IMR-90 (cell line): ENCODE measurements at regions of chr11 and their contacts with region 1.

Region 1: DNA sequence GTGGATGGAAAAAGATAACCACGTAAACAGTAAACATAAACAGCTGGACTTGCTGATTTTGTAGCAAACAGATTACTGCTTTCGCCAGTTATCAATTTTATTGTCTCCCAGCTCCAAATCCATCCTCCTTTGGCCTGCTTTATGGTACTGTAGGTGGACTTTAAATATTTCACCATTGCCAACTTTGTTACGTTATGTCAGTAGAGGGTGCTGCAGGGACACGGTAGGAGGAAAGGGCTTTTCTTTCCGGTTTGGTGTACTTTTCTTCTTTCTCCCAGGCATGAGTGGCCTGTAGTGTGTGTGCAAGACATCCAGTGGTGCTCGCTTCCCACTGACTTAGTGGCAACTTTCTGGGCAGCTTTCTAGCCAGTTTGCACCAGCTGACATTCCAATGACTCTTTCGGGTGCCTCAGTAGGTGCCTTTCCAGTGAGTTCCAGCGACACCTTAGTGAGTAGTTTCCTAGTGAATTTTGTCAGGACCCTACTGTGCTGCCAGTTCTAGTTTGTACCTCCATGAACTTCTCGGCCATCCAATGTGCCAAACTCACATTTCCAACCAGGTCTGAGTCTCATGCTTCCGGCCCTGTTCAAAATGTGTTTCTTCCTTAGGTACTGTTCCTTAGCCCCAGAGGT is 267.6 kb upstream of the TENM4 start:
- DNase-seq: peak; percentile 50
- ATAC-seq: peak; percentile 83
- H3K4me3 ChIP-seq: no peak overlapping the region
- H3K27ac ChIP-seq: no peak overlapping the region
- H3K4me1 ChIP-seq: no peaks in the 10 kb centered on the region
- H3K27me3 ChIP-seq: no peaks in the 10 kb centered on the region
- CTCF ChIP-seq: peak; percentile 76
- POLR2A ChIP-seq: no peak
- RAD21 ChIP-seq: peak; percentile 92

Region 2: DNA sequence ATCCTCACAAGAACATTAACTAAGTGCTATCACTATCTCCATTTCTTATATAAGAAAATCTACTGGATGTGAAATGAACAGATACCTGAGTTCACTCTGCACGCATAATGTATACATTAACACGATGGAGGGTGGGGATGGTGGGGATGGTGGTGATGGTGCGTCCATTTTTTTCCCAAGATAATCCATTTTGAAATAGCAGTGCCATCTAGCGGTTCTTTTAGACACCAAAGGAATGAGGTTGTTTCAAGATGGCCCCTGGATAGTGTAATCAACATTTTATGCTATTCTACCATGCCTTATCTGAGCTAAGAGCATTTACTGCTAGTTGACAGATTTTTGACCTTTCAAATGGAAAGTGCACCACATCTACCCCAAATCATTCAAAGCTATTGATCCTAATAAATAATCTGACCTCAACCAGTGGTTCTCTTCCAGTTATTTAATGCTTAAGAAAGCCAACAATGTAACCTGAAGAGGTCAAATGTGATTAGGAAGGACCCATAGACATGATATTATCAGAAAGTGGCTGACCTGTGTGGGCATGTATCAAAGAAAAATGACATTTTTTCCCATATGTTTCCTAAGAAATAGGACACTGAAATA is 447.1 kb after region 1 on chr11:
- CTCF ChIA-PET with region 1: interaction called, 10 read pairs
- POLR2A ChIA-PET with region 1: no interaction called
- dilution Hi-C with region 1: no loop called
- in situ Hi-C with region 1: loop called (anchors 5 kb)
- intact Hi-C with region 1: loop called (anchors 1 kb)
- DNase-seq: peak; percentile 37
- ATAC-seq: peak; percentile 85
- H3K4me3 ChIP-seq: no peak overlapping the region
- H3K27ac ChIP-seq: no peak overlapping the region
- H3K4me1 ChIP-seq: no peaks in the 10 kb centered on the region
- H3K27me3 ChIP-seq: no peaks in the 10 kb centered on the region
- CTCF ChIP-seq: peak; percentile 80
- POLR2A ChIP-seq: no peak
- RAD21 ChIP-seq: peak; percentile 82

Region 3: DNA sequence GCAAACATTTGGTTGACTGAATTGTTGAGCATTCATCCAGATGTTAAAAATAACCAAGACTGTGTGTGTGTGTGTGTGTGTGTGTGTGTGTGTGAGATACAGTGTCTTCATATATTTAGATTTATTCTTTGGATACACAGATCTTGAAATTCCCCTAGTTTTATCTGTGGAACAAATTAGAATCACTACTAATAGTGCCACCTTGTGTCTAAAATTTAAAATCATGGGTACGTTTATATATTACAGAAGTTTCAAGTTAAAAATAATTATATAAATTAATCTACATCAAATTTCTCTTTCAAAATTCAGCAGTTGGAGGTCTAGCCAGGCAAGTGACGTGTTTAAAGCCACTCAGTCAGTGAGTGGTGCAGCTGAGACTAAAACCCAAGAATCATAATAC is 1298.6 kb after region 1 on chr11:
- CTCF ChIA-PET with region 1: no interaction called
- POLR2A ChIA-PET with region 1: no interaction called
- dilution Hi-C with region 1: no loop called
- in situ Hi-C with region 1: no loop called
- intact Hi-C with region 1: loop called (anchors 2 kb)
- DNase-seq: peak; percentile 14
- ATAC-seq: no peak
- H3K4me3 ChIP-seq: no peak overlapping the region
- H3K27ac ChIP-seq: no peak overlapping the region
- H3K4me1 ChIP-seq: no peaks in the 10 kb centered on the region
- H3K27me3 ChIP-seq: no peaks in the 10 kb centered on the region
- CTCF ChIP-seq: 0 out of 2 replicates have a peak, but pooled peaks have one; percentile 28
- POLR2A ChIP-seq: no peak
- RAD21 ChIP-seq: 0 out of 2 replicates have a peak, but pooled peaks have one; percentile 12

Region 4: GRCh38 chr11:81497202-81497804 is 1788.9 kb after region 1 on chr11:
- CTCF ChIA-PET with region 1: no interaction called
- POLR2A ChIA-PET with region 1: no interaction called
- dilution Hi-C with region 1: no loop called
- in situ Hi-C with region 1: no loop called
- intact Hi-C with region 1: loop called (anchors 5 kb)
- DNase-seq: peak; percentile 16
- ATAC-seq: no peak; the same call in 1 of the 2 replicates
- H3K4me3 ChIP-seq: no peak overlapping the region
- H3K27ac ChIP-seq: no peak overlapping the region
- H3K4me1 ChIP-seq: no peaks in the 10 kb centered on the region
- H3K27me3 ChIP-seq: no peaks in the 10 kb centered on the region
- CTCF ChIP-seq: peak; percentile 50
- POLR2A ChIP-seq: no peak
- RAD21 ChIP-seq: no peak